ENCODE measurements at regions of chr12 and their contacts with region 1.

Region 1: GRCh38 chr12:91382081-91382543 is 199.5 kb upstream of the DCN start:
- DNase-seq: peak; percentile 91
- H3K4me3 ChIP-seq: peak overlapping the region; percentile 17 to 66 (median 34)
- H3K27ac ChIP-seq: peak overlapping the region; percentile 54
- H3K4me1 ChIP-seq: peaks cover 8% of the 10 kb centered on the region
- H3K27me3 ChIP-seq: no peaks in the 10 kb centered on the region
- CTCF ChIP-seq: peak; percentile 80 to 83
- POLR2A ChIP-seq: no peak

Region 2: GRCh38 chr12:91367234-91367849 is 14.8 kb before region 1 on chr12:
- CTCF ChIA-PET with region 1: interaction called, 14 read pairs
- POLR2A ChIA-PET with region 1: no interaction called
- dilution Hi-C with region 1: no loop called
- intact Hi-C with region 1: no loop called
- DNase-seq: peak; percentile 24
- H3K4me3 ChIP-seq: no peak overlapping the region
- H3K27ac ChIP-seq: no peak overlapping the region
- H3K4me1 ChIP-seq: peaks cover 15% of the 10 kb centered on the region
- H3K27me3 ChIP-seq: no peaks in the 10 kb centered on the region
- CTCF ChIP-seq: peak; percentile 20 to 36
- POLR2A ChIP-seq: no peak

Region 3: GRCh38 chr12:91538418-91538817 is 156.3 kb after region 1 on chr12:
- CTCF ChIA-PET with region 1: interaction called, 10 read pairs
- POLR2A ChIA-PET with region 1: no interaction called
- dilution Hi-C with region 1: no loop called
- intact Hi-C with region 1: loop called (anchors 5 kb)
- DNase-seq: peak; percentile 79
- H3K4me3 ChIP-seq: no peak overlapping the region
- H3K27ac ChIP-seq: no peak overlapping the region
- H3K4me1 ChIP-seq: peaks cover 15% of the 10 kb centered on the region
- H3K27me3 ChIP-seq: no peaks in the 10 kb centered on the region
- CTCF ChIP-seq: no peak
- POLR2A ChIP-seq: peak; percentile 52

Region 4: DNA sequence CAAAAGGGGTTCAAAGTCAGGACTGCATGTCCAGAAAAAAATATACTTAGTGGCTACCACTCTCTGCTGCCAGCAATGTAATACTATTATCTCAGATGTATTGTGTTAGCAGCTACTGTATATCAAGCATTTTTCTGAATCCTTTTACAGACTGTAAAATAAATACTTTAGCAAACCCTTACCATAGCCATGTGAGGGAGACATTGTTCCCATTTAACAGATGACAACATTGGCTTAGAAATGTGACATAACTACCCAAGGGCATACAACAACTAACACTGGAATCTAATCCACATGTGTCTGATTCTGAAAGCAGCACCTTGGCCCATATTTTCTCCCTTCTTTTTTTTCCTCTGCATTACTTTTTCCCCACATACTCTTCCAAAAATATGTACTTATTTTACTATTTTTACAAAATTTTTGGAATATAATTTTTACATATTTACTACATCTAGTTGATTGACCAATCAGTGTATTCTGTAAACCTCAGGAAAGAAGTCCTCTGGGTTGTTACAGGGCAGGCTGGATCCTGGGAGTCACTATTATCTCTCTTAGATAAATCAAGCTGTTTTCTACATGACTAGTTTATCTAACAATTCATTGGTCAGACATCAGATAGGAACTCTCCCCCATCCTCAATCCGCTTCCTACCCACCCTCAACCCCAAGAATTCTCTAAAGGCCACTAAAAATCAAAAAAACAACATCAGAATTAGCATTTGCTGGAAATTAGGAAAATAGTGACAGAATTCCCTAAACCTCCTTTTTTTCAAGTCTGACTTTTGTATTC is 609.5 kb after region 1 on chr12:
- CTCF ChIA-PET with region 1: interaction called, 12 read pairs
- POLR2A ChIA-PET with region 1: no interaction called
- dilution Hi-C with region 1: no loop called
- intact Hi-C with region 1: loop called (anchors 2 kb)
- DNase-seq: peak; percentile 55
- H3K4me3 ChIP-seq: no peak overlapping the region
- H3K27ac ChIP-seq: peak overlapping the region; percentile 94
- H3K4me1 ChIP-seq: peaks cover 69% of the 10 kb centered on the region
- H3K27me3 ChIP-seq: no peaks in the 10 kb centered on the region
- CTCF ChIP-seq: no peak
- POLR2A ChIP-seq: no peak

Region 5: GRCh38 chr12:92208613-92209121 is 826.6 kb after region 1 on chr12:
- CTCF ChIA-PET with region 1: interaction called, 6 read pairs
- POLR2A ChIA-PET with region 1: no interaction called
- dilution Hi-C with region 1: no loop called
- intact Hi-C with region 1: loop called (anchors 5 kb)
- DNase-seq: peak; percentile 97
- H3K4me3 ChIP-seq: peak overlapping the region in 1 of 3 experiments; percentile 47
- H3K27ac ChIP-seq: peak overlapping the region; percentile 82
- H3K4me1 ChIP-seq: peaks cover 13% of the 10 kb centered on the region
- H3K27me3 ChIP-seq: no peaks in the 10 kb centered on the region
- CTCF ChIP-seq: no peak
- POLR2A ChIP-seq: no peak

Region 6: GRCh38 chr12:92562063-92562734 is 1180.1 kb after region 1 on chr12:
- CTCF ChIA-PET with region 1: interaction called, 20 read pairs
- POLR2A ChIA-PET with region 1: no interaction called
- dilution Hi-C with region 1: no loop called
- intact Hi-C with region 1: no loop called
- DNase-seq: no peak
- H3K4me3 ChIP-seq: no peak overlapping the region
- H3K27ac ChIP-seq: no peak overlapping the region
- H3K4me1 ChIP-seq: no peaks in the 10 kb centered on the region
- H3K27me3 ChIP-seq: no peaks in the 10 kb centered on the region
- CTCF ChIP-seq: no peak
- POLR2A ChIP-seq: no peak

Region 7: GRCh38 chr12:92649511-92650227 is 1267.6 kb after region 1 on chr12:
- CTCF ChIA-PET with region 1: interaction called, 86 read pairs
- POLR2A ChIA-PET with region 1: no interaction called
- dilution Hi-C with region 1: no loop called
- intact Hi-C with region 1: loop called (anchors 1 kb)
- DNase-seq: peak; percentile 75
- H3K4me3 ChIP-seq: no peak overlapping the region
- H3K27ac ChIP-seq: no peak overlapping the region
- H3K4me1 ChIP-seq: no peaks in the 10 kb centered on the region
- H3K27me3 ChIP-seq: no peaks in the 10 kb centered on the region
- CTCF ChIP-seq: peak; percentile 69 to 70
- POLR2A ChIP-seq: no peak

Measured in endothelial cell of umbilical vein (primary cell).